Heart left ventricle (tissue), 16 donors: ENCODE measurements at regions of chr7 and their contacts with region 1.

Region 1: DNA sequence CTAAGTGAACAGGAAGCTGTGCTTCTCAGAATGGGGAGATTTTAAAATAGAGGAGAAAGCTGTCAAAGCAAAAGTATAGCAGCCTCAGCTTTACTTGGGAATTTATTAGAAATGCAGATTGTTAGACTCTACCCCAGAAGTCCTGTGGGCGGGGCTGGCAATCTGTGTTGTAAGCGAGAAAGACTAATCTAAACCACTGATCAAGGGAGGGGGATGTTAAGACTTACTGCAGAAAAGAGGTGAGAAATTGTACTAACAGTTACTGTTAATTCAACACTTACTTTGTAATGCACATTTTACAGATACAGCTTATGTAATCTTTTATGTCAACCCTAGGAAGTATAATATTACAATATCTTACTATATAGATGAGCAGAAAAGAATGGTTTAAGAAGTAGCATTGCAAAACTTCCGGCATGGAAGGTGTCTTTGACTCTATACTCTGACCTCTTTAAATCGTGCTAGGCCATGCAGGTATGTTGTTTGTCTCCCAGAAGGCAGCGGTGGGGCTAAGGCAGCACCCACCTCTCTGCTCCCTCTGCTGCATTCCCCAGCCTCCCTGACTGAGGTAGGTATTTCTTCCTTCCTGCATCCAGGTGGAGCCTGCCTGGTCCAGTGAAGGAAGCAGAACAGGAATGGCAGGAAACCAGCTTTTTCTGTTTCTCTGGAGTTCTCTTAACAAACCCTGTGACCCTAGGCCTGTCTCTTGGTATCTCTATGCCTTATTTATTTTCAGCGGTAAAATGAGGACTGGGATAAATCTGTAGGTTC is 462.2 kb downstream of the AUTS2 start:
- DNase-seq: no peak
- ATAC-seq: no peak
- H3K4me3 ChIP-seq: no peak overlapping the region
- H3K27ac ChIP-seq: no peak overlapping the region
- H3K4me1 ChIP-seq: peaks cover 0 to 17% (median 2%) of the 10 kb centered on the region in 12 donors
- H3K27me3 ChIP-seq: no peaks in the 10 kb centered on the region
- CTCF ChIP-seq: no peak
- POLR2A ChIP-seq: no peak

Region 2: DNA sequence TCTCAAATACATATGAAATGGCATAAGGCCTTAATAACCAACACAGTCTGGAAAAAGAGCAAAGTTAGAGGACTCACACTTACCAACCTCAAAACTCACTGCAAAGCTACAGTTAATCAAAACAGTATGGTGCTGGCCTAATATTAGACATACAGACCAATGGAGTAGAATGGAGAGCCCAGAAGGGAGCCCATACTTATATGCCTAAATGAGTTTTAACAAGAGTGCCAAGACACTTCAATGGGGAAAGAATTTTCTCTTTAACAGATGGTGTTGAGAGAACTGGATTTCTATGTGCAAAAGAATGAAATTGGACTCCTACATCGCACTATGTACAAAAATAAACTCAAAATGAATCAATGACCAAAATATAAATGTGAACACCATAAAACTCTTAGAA is 60.4 kb after region 1 on chr7:
- intact Hi-C with region 1: loop called in 1 of 10 experiments (anchors 10 kb)
- DNase-seq: no peak
- ATAC-seq: no peak
- H3K4me3 ChIP-seq: no peak overlapping the region
- H3K27ac ChIP-seq: no peak overlapping the region
- H3K4me1 ChIP-seq: no peaks in the 10 kb centered on the region
- H3K27me3 ChIP-seq: no peaks in the 10 kb centered on the region
- CTCF ChIP-seq: no peak
- POLR2A ChIP-seq: no peak

Region 3: GRCh38 chr7:70148997-70149396 is 88.5 kb after region 1 on chr7:
- intact Hi-C with region 1: loop called in 1 of 10 experiments (anchors 5 kb)
- DNase-seq: no peak
- ATAC-seq: no peak
- H3K4me3 ChIP-seq: no peak overlapping the region
- H3K27ac ChIP-seq: no peak overlapping the region
- H3K4me1 ChIP-seq: no peaks in the 10 kb centered on the region
- H3K27me3 ChIP-seq: no peaks in the 10 kb centered on the region
- CTCF ChIP-seq: no peak
- POLR2A ChIP-seq: no peak

Region 4: GRCh38 chr7:70288781-70289456 is 228.4 kb after region 1 on chr7:
- intact Hi-C with region 1: no loop called
- DNase-seq: no peak
- ATAC-seq: no peak
- H3K4me3 ChIP-seq: no peak overlapping the region
- H3K27ac ChIP-seq: no peak overlapping the region
- H3K4me1 ChIP-seq: no peaks in the 10 kb centered on the region
- H3K27me3 ChIP-seq: no peaks in the 10 kb centered on the region
- CTCF ChIP-seq: no peak
- POLR2A ChIP-seq: no peak